IMR-90 (cell line): ENCODE measurements at regions of chr2 and their contacts with region 1.

Region 1: GRCh38 chr2:205680067-205680466 is 2.2 kb upstream of the NRP2 start:
- DNase-seq: peak; percentile 92
- ATAC-seq: peak; percentile 21
- H3K4me3 ChIP-seq: no peak overlapping the region
- H3K27ac ChIP-seq: no peak overlapping the region
- H3K4me1 ChIP-seq: peaks cover 4% of the 10 kb centered on the region
- H3K27me3 ChIP-seq: no peaks in the 10 kb centered on the region
- CTCF ChIP-seq: peak; percentile 76
- POLR2A ChIP-seq: no peak
- RAD21 ChIP-seq: peak; percentile 69

Region 2: DNA sequence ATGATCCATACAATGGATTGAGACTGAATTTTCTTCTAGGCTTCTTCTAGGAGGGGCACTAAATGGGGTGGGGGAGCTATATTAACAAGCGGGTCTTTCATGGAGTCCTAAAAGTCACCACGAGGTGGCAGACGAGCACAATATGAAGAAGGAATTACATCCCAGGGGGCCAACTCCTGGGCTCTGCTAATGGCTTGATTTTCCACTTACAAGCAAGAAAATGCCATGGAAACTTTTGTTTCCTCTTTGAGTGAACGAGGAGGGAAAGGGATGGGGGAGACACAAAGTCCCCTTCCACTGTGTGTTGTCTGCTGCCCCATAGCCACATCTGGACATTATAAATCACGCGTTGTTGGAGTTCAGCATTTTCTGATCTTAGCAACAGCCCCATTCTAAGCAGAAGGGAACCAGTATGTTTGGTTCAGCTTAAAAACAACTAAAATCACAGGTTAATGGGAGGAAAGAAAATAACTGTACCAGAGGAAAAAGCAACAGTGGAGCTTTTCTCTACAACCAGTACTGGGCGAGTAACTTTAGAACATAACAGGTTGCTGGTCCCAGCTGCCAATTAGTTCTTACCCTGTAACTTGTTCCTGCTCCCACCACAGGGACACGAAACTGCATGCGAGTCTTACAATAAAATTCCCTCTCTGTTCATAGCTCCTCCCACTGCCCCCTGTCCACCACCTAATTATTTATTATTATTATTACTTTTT is 1419.7 kb before region 1 on chr2:
- CTCF ChIA-PET with region 1: interaction called, 3 read pairs
- POLR2A ChIA-PET with region 1: interaction called, 5 read pairs
- dilution Hi-C with region 1: no loop called
- in situ Hi-C with region 1: loop called (anchors 10 kb)
- intact Hi-C with region 1: loop called (anchors 2 kb)
- DNase-seq: peak; percentile 74
- ATAC-seq: peak; percentile 94
- H3K4me3 ChIP-seq: no peak overlapping the region
- H3K27ac ChIP-seq: no peak overlapping the region
- H3K4me1 ChIP-seq: peaks cover 3% of the 10 kb centered on the region; the same call in 1 of the 2 replicates
- H3K27me3 ChIP-seq: no peaks in the 10 kb centered on the region; the same call in none of the 2 replicates
- CTCF ChIP-seq: peak; percentile 79
- POLR2A ChIP-seq: no peak
- RAD21 ChIP-seq: peak; percentile 76

Region 3: DNA sequence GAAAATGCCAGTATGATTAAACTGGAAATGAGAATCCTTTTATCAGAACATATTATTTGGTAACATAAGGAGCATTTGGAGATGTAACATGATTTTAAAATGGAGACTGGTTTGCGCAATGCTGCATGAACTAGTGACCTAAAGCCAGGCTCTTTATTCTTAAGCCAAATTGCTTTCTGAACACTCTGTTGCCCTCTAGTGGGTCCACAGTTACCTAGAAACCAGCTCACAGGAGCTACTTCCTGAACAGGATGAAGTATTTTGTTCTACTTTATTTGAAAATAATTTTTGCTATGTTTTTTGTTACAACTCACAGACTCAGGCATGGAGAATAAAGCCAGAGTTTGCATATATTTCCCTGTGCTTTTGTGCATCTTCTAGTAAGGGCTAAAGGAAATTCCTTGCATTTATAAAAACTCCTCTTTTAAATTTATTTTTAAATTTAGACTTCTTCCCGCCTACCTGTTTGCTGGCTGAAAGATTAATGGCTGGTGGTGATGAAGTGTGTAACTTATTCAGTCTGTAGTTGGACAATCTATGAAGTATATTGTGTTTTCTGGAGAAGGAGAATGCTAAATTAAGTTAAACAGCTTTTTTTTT is 988.1 kb before region 1 on chr2:
- CTCF ChIA-PET with region 1: interaction called, 3 read pairs
- POLR2A ChIA-PET with region 1: interaction called, 4 read pairs
- dilution Hi-C with region 1: no loop called
- in situ Hi-C with region 1: loop called (anchors 10 kb)
- intact Hi-C with region 1: loop called (anchors 5 kb)
- DNase-seq: peak; percentile 91
- ATAC-seq: peak; percentile 74
- H3K4me3 ChIP-seq: no peak overlapping the region
- H3K27ac ChIP-seq: no peak overlapping the region
- H3K4me1 ChIP-seq: peaks cover 3% of the 10 kb centered on the region; the same call in 1 of the 2 replicates
- H3K27me3 ChIP-seq: no peaks in the 10 kb centered on the region
- CTCF ChIP-seq: peak; percentile 84
- POLR2A ChIP-seq: no peak
- RAD21 ChIP-seq: peak; percentile 92

Region 4: DNA sequence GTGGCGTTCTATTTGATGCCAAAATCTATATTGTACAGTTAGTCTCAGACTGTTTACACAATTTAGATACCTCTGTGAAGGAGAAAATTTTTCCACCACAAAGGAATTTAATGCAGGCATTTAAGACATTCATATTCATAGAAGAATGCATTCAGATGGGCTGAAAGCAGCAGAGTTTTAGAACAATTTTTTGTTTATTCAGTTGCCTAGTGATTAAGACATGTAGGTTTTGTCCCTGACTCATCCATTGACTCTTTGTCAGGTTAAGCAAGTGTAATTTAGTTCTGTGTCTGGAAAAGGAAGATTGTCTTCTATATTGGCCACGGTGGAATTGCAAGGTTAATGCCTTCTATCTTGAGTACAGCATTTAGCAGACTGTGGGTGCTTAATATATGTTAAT is 619.8 kb before region 1 on chr2:
- CTCF ChIA-PET with region 1: no interaction called
- POLR2A ChIA-PET with region 1: no interaction called
- dilution Hi-C with region 1: no loop called
- in situ Hi-C with region 1: no loop called
- intact Hi-C with region 1: loop called (anchors 2 kb)
- DNase-seq: peak; percentile 89
- ATAC-seq: peak; percentile 87
- H3K4me3 ChIP-seq: no peak overlapping the region
- H3K27ac ChIP-seq: no peak overlapping the region
- H3K4me1 ChIP-seq: peaks cover 4% of the 10 kb centered on the region
- H3K27me3 ChIP-seq: no peaks in the 10 kb centered on the region
- CTCF ChIP-seq: no peak
- POLR2A ChIP-seq: no peak
- RAD21 ChIP-seq: no peak

Region 5: GRCh38 chr2:205405752-205406151 is 274.3 kb before region 1 on chr2:
- CTCF ChIA-PET with region 1: interaction called, 3 read pairs
- POLR2A ChIA-PET with region 1: no interaction called
- dilution Hi-C with region 1: no loop called
- in situ Hi-C with region 1: no loop called
- intact Hi-C with region 1: loop called (anchors 5 kb)
- DNase-seq: peak; percentile 94
- ATAC-seq: peak; percentile 85
- H3K4me3 ChIP-seq: no peak overlapping the region; the same call in 1 of the 2 replicates
- H3K27ac ChIP-seq: peak overlapping the region; percentile 98
- H3K4me1 ChIP-seq: peaks cover 9% of the 10 kb centered on the region
- H3K27me3 ChIP-seq: no peaks in the 10 kb centered on the region
- CTCF ChIP-seq: no peak
- POLR2A ChIP-seq: no peak
- RAD21 ChIP-seq: no peak

Region 6: DNA sequence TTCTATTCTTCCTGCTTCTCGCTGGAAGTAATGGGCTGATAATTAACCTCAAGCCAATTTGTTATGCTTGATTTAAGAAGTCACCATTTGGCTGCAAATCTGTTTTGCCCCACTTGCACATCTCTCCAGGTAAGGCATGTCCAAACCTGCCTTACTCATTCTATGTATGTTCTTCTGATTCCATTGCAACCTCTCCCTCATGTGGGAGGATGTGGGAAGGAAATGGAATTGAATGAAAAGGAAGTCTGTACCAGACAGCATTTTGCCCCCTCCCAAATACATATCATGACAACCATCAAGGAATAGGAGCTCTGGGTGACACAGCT is 133.9 kb after region 1 on chr2:
- CTCF ChIA-PET with region 1: no interaction called
- POLR2A ChIA-PET with region 1: no interaction called
- dilution Hi-C with region 1: no loop called
- in situ Hi-C with region 1: no loop called
- intact Hi-C with region 1: loop called (anchors 5 kb)
- DNase-seq: no peak
- ATAC-seq: no peak
- H3K4me3 ChIP-seq: no peak overlapping the region
- H3K27ac ChIP-seq: no peak overlapping the region
- H3K4me1 ChIP-seq: no peaks in the 10 kb centered on the region
- H3K27me3 ChIP-seq: peaks cover 23% of the 10 kb centered on the region
- CTCF ChIP-seq: no peak
- POLR2A ChIP-seq: no peak
- RAD21 ChIP-seq: no peak

Region 7: DNA sequence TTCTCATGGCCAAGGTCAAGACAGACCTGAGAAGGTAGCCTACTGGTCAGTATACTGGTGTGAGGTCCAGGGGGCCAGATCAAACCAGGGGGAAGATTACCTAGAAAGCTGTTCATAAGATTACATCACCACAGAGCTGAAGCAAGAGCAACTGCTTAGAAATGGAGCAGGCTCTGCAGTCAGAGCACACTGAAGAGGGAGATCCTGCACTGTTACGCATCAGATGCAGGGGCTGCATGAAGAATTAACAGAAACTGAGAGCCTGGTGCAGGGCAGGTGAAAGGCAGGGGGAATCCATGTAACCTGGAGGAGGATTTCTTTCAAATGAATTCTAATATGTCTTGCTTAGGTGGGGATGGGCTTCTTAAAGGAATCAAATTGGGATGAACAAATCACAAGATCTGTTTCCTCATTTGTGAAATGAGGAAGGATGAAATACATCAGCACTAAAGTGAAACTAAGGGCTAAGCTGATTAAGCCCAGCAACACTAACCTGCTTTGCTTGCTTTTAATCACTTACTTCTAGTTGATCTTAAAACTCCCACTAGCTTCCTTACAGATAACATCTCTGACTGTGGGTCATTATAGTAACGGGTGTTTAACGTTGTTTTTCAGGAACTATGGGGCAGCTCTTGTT is 689.0 kb after region 1 on chr2:
- CTCF ChIA-PET with region 1: no interaction called
- POLR2A ChIA-PET with region 1: no interaction called
- dilution Hi-C with region 1: no loop called
- in situ Hi-C with region 1: no loop called
- intact Hi-C with region 1: no loop called
- DNase-seq: no peak
- ATAC-seq: no peak
- H3K4me3 ChIP-seq: no peak overlapping the region
- H3K27ac ChIP-seq: no peak overlapping the region
- H3K4me1 ChIP-seq: no peaks in the 10 kb centered on the region
- H3K27me3 ChIP-seq: no peaks in the 10 kb centered on the region
- CTCF ChIP-seq: no peak
- POLR2A ChIP-seq: no peak
- RAD21 ChIP-seq: no peak